Activated B cell treated with CpG ODN at 0.5 μM for 24 hours (primary cell): ENCODE measurements at regions of chr6 and their contacts with region 1.

Region 1: GRCh38 chr6:150600301-150601017 is 774 bp downstream of the PLEKHG1 start:
- DNase-seq: peak; percentile 82
- ATAC-seq: peak; percentile 70
- H3K4me3 Mint-ChIP-seq: peak overlapping the region; percentile 98
- H3K27ac Mint-ChIP-seq: peak overlapping the region; percentile 97
- H3K4me1 Mint-ChIP-seq: peaks cover 68% of the 10 kb centered on the region
- H3K27me3 Mint-ChIP-seq: no peaks in the 10 kb centered on the region
- CTCF ChIP-seq: no peak

Region 2: DNA sequence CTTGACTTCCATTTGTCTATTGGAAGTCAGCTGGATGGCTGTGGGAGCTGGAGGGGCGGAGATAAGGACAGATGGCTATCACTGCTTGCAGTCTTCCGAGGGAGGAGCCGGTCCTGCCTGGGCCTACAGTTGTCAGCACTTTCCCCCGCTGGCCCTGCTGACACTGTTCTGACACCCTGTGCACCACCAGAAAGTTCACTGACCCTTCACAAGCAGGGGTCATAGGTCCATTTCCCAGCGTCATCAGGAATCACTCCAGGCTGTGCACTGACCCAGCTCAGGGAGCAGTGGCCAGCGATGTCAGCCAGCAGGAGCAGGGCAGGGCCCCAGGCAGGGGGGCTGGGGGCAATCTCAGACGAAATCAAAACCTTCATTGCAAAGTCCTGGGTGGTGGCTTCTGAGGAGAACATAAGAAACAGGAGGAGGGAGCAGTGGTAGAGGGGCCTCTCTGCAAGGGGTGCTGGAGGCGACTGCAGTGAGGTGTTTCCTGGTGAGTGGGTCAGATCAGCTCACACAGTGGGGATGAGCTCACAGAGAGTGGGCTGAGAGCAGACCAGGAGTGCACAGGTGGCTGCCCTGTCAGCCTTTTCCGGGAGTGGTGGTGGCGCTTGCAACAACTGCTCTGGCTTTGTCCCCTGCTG is 27.3 kb before region 1 on chr6:
- CTCF ChIA-PET with region 1: no interaction called
- POLR2A ChIA-PET with region 1: interaction called, 8 read pairs
- intact Hi-C with region 1: loop called (anchors 1 kb)
- DNase-seq: no peak
- ATAC-seq: no peak
- H3K4me3 Mint-ChIP-seq: no peak overlapping the region
- H3K27ac Mint-ChIP-seq: no peak overlapping the region
- H3K4me1 Mint-ChIP-seq: peaks cover 22% of the 10 kb centered on the region
- H3K27me3 Mint-ChIP-seq: peaks cover 50% of the 10 kb centered on the region
- CTCF ChIP-seq: no peak

Region 3: DNA sequence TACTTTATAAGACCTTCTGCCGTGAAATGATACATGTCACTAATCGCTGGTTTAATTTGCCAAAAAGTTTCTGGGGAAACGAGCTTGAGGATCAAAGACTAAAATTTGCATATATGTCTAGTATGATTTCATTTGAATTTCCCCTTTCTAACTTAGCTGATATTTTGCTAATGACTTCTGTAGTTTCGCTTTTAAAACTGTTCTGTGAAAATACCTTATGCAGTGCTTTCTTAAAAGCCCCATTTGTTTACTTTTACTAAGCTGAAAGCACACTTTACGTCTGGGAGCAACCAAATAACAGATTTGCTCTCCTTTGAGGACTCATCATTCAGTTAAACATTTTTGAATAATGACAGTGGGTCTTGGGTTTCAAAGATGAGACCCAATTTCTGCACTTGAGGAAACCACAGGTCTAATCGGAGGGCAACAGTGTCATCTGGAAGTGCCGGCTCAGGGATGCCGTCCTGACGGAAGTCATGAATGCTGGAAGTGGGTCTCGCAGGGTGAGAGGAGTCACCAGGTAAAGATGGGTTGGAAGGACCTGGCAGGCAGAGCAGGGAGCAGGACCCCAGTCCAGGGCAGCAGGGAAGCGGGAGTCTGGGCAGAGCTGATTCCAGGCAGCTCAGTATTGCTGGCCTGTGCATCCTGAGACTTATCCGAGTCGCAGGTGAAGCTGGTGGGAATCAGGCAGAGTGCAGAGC is 32.5 kb after region 1 on chr6:
- CTCF ChIA-PET with region 1: interaction called, 50 read pairs
- POLR2A ChIA-PET with region 1: interaction called, 537 read pairs
- intact Hi-C with region 1: loop called (anchors 1 kb)
- DNase-seq: peak; percentile 33
- ATAC-seq: peak; percentile 11
- H3K4me3 Mint-ChIP-seq: peak overlapping the region; percentile 99
- H3K27ac Mint-ChIP-seq: peak overlapping the region; percentile 97
- H3K4me1 Mint-ChIP-seq: peaks cover 91% of the 10 kb centered on the region
- H3K27me3 Mint-ChIP-seq: no peaks in the 10 kb centered on the region
- CTCF ChIP-seq: no peak

Region 4: DNA sequence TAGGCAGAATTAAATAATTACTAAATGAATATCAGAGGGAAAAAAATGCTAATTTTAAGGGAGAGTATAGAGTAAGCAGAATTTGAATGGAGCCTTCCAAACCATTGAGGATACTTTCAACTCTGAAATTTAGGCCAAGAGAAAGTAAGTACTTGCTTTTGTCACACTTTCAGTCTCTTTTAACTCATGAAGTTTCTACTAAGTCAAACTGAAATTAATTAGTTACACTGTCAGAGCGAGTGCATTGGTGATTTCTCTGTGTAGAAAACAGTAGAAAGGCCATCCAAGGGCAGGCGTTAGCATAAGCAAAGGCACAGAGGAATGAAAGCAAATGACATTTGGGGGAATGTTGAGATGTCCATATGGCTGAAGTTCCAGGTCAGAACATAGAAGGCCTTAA is 92.1 kb after region 1 on chr6:
- CTCF ChIA-PET with region 1: interaction called, 4 read pairs
- POLR2A ChIA-PET with region 1: interaction called, 62 read pairs
- intact Hi-C with region 1: no loop called
- DNase-seq: no peak
- ATAC-seq: no peak
- H3K4me3 Mint-ChIP-seq: no peak overlapping the region
- H3K27ac Mint-ChIP-seq: peak overlapping the region; percentile 71
- H3K4me1 Mint-ChIP-seq: peaks cover 94% of the 10 kb centered on the region
- H3K27me3 Mint-ChIP-seq: no peaks in the 10 kb centered on the region
- CTCF ChIP-seq: no peak

Region 5: DNA sequence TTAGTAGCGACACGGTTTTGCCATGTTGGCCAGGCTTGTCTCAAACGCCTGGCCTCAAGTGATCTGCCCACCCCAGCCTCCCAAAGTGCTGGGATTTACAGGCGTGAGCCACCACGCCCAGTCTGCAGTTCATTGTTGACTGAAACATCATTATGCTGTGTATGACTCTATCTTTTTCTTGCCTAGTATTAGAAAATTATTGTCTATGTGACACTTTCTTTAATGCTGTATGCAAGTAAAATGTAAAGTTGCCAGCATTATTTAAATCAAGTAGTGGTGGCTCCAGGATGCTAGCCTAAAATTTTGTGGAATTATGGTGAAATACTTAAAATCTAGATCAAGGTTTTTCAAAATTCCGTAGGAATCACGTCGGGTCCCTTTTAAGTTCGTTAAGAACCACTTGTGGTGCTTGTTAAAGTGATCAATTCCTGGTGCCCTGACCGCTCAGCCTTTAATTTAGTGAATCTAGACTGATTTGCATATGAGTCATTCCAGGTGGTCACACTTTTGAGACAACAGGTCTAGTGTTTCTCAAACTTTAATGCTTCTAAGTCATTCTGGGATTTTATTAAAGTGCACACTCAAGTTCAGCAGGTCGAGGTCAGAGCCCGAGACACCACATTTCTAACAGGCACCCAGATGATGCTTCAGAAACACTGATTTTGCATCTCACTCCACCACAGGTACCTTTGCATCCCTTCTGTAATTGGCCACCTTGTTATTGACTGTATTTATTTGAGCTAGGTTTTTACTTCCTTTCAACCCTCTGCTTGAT is 132.5 kb after region 1 on chr6:
- CTCF ChIA-PET with region 1: no interaction called
- POLR2A ChIA-PET with region 1: interaction called, 12 read pairs
- intact Hi-C with region 1: no loop called
- DNase-seq: no peak
- ATAC-seq: peak; percentile 71
- H3K4me3 Mint-ChIP-seq: no peak overlapping the region
- H3K27ac Mint-ChIP-seq: peak overlapping the region; percentile 70
- H3K4me1 Mint-ChIP-seq: peaks cover 49% of the 10 kb centered on the region
- H3K27me3 Mint-ChIP-seq: no peaks in the 10 kb centered on the region
- CTCF ChIP-seq: no peak